ENCODE measurements at regions of chr22 and their contacts with region 1.

Region 1: DNA sequence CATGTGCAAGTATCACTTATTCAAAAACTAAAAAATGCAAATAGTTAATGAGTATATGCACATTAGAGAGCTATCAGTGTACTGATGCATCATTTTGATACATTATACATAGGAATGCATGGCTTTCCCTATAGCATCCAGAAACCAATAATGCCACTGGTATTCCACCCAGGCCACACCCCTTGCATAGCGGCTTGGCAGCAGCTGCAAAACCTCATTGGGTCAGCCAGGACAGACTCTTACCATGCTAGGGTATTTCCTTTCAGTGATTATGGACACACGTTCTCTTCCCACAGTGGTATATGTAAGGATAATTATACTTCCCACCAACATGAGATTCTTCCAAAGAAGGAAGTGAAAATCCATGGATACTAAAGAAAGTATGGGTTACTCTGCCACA is 145.9 kb upstream of the PITPNB start:
- DNase-seq: no peak
- ATAC-seq: no peak
- H3K4me3 ChIP-seq: no peak overlapping the region
- H3K27ac ChIP-seq: no peak overlapping the region
- H3K4me1 ChIP-seq: no peaks in the 10 kb centered on the region
- H3K27me3 ChIP-seq: no peaks in the 10 kb centered on the region
- CTCF ChIP-seq: no peak

Region 2: DNA sequence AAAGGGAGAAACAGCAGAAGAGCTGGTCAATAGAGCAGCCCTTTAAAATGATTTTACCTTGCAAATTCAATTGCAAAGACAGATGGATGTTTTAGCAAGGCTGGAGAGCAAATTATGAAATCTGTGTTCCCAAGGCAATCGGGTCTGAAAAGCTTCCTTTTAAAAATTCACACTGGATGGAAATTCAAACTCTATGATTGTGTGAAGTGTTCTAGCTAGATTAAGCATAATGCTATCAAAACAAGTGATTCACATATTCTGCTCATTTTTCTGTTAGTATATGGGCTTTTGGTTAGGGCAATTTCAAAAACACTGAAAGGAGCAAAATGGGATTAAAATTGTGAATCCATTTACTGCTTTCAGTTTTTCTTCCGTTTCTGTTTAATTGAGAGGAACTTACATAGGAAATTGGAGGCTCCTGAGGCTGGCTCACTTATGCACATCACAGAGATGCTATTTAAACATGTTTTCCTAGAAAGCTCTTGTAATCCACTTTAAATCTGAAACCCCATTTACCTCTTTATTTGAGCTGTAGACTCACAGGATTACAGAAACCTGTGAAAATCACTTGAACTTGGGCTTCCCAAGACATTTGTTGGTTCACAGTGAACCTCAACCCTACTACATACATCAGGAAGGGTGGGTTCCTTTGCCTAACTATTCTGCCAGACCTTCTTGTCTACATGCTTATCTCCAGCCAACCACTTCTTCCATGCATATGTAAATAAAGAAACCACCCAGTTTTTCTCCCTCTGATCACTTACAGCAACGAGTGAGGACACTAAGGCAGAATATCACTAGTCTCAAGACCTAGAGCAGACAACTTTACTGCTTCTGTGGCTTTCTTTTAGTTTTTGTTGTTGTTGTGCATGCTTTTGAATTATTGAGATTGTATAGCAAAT is 56.0 kb after region 1 on chr22:
- intact Hi-C with region 1: loop called in 1 of 3 experiments (anchors 10 kb)
- DNase-seq: no peak
- ATAC-seq: no peak
- H3K4me3 ChIP-seq: no peak overlapping the region
- H3K27ac ChIP-seq: no peak overlapping the region
- H3K4me1 ChIP-seq: no peaks in the 10 kb centered on the region
- H3K27me3 ChIP-seq: no peaks in the 10 kb centered on the region
- CTCF ChIP-seq: no peak

Region 3: GRCh38 chr22:28180804-28181731 is 116.1 kb after region 1 on chr22:
- intact Hi-C with region 1: no loop called
- DNase-seq: no peak
- ATAC-seq: peak; percentile 45 to 73 (median 53)
- H3K4me3 ChIP-seq: no peak overlapping the region
- H3K27ac ChIP-seq: no peak overlapping the region
- H3K4me1 ChIP-seq: peaks cover 0 to 12% (median 8%) of the 10 kb centered on the region in 3 donors
- H3K27me3 ChIP-seq: no peaks in the 10 kb centered on the region
- CTCF ChIP-seq: no peak

Measured in pancreas (tissue), 10 donors.